GM10248 (cell line): ENCODE measurements at regions of chr2 and their contacts with region 1.

Region 1: GRCh38 chr2:71157124-71157793 is 26.8 kb downstream of the MPHOSPH10 start:
- DNase-seq: peak; percentile 63
- CTCF ChIP-seq: peak; percentile 63

Region 2: GRCh38 chr2:70753902-70754301 is 403.4 kb before region 1 on chr2:
- CTCF ChIA-PET with region 1: no interaction called
- POLR2A ChIA-PET with region 1: no interaction called
- DNase-seq: no peak
- CTCF ChIP-seq: no peak

Region 3: GRCh38 chr2:71049365-71050360 is 107.6 kb before region 1 on chr2:
- CTCF ChIA-PET with region 1: interaction called, 53 read pairs
- POLR2A ChIA-PET with region 1: no interaction called
- DNase-seq: peak; percentile 51
- CTCF ChIP-seq: peak; percentile 52

Region 4: GRCh38 chr2:71143782-71144181 is 13.5 kb before region 1 on chr2:
- CTCF ChIA-PET with region 1: interaction called, 39 read pairs
- POLR2A ChIA-PET with region 1: no interaction called
- DNase-seq: no peak
- CTCF ChIP-seq: no peak